Posterior cingulate gyrus (tissue), 11 donors: ENCODE measurements at regions of chr9 and their contacts with region 1.

Region 1: DNA sequence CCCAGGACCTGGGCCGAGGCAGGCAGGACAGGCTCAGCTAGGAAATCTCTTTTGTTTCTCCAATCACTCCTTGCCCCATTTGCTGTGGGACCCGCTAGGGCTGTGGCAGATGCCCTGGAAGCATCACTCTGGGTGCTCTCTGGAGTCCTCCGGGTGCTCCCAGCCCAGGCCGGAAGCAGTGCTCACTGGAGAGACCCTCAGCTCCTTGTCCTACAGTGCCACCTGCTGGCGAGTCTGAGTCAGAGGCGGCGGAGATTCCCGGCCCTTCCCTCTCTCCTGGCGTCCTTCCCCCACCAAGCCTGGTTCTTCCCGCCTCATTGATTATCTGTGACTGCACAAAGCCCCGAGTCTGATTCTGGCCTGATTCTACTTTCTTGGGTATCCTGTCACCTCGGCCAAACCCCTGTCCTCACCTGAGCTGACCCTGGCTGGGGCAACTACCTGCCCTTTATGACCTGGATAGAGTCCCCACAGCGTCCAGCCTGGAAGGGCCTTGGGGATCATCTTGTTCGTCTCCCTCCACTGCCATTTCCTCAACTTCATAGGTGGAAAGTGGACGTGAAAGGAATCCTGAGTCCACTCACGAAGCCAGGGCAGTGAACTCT is 7.3 kb upstream of the BARHL1 start:
- DNase-seq: peak; percentile 61 to 97 (median 78)

Region 2: GRCh38 chr9:132411091-132411508 is 164.0 kb before region 1 on chr9:
- intact Hi-C with region 1: loop called (anchors 2 kb)
- DNase-seq: peak in 4 of 10 donors; percentile 10 to 24 (median 18)

Region 3: DNA sequence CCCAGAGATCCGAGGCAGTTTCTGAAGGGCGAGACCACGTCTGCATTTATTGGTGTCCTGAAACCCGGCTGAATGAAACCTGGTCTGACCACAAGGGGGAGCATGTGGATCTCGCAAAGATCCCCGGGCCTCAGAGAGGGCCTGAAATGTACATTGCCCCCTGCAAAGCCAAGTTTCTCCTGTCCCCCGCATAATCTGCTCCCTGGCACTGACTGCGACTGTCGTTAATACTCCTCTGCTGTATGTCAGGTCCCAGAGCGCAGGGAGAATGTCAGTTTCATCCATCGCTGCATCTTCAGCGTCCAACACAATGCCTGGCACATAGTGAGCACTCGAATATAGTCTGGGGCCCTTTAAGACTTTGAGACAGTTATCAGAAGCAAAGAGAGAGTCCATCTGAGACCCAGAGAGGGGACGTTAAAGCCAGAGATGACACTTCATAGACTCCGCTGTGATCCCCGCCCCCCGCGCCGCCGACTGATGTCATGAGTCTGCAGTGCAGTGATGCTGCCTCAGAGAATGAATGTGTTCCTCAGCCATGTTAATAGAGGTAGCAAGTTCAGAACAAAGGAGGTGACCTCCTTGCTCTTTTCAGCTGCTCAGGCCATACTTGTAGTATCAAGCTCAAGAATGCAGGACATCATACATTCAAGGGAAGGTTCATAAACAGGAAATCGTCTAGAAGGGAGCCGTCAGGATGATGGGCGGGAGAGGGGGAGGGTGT is 67.2 kb before region 1 on chr9:
- intact Hi-C with region 1: loop called (anchors 1 kb)
- DNase-seq: peak in 9 of 10 donors; percentile 42 to 92 (median 70)